Head of caudate nucleus (tissue), 42 donors: ENCODE measurements at regions of chr19 and their contacts with region 1.

Region 1: DNA sequence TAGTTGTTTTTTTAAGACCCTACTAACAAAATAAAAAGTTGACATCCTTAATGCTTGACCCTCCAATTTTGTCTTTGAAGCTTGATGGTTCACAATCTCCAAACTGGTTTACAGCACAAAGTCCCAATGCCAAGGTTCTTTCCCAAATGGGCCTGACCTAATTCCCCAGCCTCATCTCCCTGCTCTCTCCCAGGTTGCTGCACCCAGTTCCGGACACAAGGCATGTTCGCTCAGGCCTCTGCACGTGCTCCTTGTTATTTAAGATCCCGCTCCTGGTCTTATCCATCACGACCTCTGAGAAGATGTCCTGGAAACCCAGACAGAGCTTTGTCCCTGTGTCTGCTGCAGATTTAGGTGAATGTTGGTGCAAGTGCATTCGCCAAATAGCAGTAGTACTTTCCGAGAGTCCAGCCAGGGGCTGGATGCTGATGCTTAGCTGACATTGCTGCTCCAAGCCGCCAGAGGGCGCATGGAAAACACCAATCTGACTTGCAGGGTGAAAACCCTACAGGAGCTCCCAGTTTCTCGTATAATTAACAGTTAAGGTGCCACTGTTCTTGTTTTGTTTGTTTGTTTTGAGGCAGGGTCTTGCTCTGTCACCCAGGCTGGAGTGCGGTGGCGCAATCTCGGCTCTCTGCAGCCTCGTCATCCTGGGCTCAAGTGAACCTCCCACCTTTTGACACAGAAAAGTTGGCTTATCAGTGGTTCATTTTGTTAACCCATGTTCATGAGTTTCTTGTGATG is 18.5 kb downstream of the LYPD3 start:
- DNase-seq: peak; percentile 60 to 92 (median 84)

Region 2: GRCh38 chr19:43503501-43504425 is 56.8 kb after region 1 on chr19:
- intact Hi-C with region 1: loop called (anchors 5 kb)
- DNase-seq: peak; percentile 92 to 98 (median 97)

Region 3: GRCh38 chr19:43519436-43520088 is 72.6 kb after region 1 on chr19:
- intact Hi-C with region 1: loop called (anchors 2 kb)
- DNase-seq: peak; percentile 48 to 94 (median 87)